ENCODE measurements at regions of chr14 and their contacts with region 1.

Region 1: DNA sequence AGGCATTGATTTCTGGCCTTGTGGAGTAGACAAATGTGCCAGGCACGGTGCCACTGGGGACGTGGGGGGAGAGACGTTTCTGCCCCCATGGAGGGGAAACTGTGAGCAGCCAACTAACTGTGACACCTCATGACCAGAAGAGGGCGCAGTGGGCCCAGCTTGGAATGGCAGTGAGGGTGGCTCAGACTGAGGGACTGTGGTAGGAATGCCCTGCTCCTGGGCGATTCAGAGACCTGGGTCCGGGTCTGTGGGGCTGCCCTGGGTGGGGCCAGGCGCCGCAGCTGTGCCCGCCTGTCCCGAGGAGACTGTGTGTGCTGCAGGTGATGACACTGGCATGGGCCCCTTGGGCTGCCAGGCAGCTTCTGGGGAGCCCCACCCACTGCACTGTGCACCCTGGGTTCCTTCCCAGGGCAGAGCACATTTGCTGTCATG is 60.6 kb downstream of the SLC25A47 start:
- DNase-seq: peak; percentile 87
- H3K4me3 ChIP-seq: peak overlapping the region in 1 of 2 experiments; percentile 15; a peak in 1 of 4 replicates
- H3K27ac ChIP-seq: peak overlapping the region in 1 of 2 experiments; percentile 90; a peak in 2 of 4 replicates
- H3K4me1 ChIP-seq: peaks cover 10 to 46% of the 10 kb centered on the region in 2 experiments
- H3K27me3 ChIP-seq: no peaks in the 10 kb centered on the region
- CTCF ChIP-seq: peak; percentile 83
- EP300 ChIP-seq: no peak
- RAD21 ChIP-seq: peak; percentile 88

Region 2: DNA sequence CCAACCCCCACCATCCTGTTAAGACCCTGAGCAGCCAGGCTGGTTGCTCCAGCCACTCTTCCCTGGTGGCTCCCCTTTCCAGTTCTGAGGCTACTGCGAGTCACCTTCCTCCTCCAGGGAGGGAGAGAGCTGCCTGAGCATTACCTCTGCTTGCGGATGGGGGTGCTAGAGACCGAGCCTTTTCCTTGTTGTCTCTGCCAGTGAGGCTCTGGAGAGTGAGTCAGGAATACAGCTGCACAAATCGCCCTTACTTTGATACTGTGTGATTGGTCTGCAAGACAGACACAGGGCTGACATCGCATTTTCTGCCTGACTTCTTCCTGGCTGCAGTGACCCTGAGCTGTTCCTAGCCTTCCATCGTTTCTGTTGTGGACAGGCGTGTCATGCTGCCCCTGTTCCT is 33.7 kb after region 1 on chr14:
- CTCF ChIA-PET with region 1: interaction called, 310 read pairs
- POLR2A ChIA-PET with region 1: interaction called, 7 read pairs
- DNase-seq: peak; percentile 85
- H3K4me3 ChIP-seq: no peak overlapping the region; a peak in 1 of 4 replicates
- H3K27ac ChIP-seq: peak overlapping the region; percentile 52 to 84
- H3K4me1 ChIP-seq: peaks cover 9 to 53% of the 10 kb centered on the region in 2 experiments
- H3K27me3 ChIP-seq: no peaks in the 10 kb centered on the region
- CTCF ChIP-seq: peak; percentile 88
- EP300 ChIP-seq: peak in 1 of 2 experiments; percentile 49; a peak in 1 of 4 replicates
- RAD21 ChIP-seq: peak; percentile 98

Region 3: GRCh38 chr14:100567009-100567876 is 183.5 kb after region 1 on chr14:
- CTCF ChIA-PET with region 1: interaction called, 13 read pairs
- POLR2A ChIA-PET with region 1: interaction called, 7 read pairs
- DNase-seq: peak; percentile 85
- H3K4me3 ChIP-seq: peak overlapping the region; percentile 58 to 59; a peak in 3 of 4 replicates
- H3K27ac ChIP-seq: peak overlapping the region in 1 of 2 experiments; percentile 94; a peak in 2 of 4 replicates
- H3K4me1 ChIP-seq: peaks cover 0 to 66% of the 10 kb centered on the region in 2 experiments; a peak in 1 of 4 replicates
- H3K27me3 ChIP-seq: peaks cover 18% of the 10 kb centered on the region
- CTCF ChIP-seq: no peak
- EP300 ChIP-seq: no peak
- RAD21 ChIP-seq: no peak

Region 4: DNA sequence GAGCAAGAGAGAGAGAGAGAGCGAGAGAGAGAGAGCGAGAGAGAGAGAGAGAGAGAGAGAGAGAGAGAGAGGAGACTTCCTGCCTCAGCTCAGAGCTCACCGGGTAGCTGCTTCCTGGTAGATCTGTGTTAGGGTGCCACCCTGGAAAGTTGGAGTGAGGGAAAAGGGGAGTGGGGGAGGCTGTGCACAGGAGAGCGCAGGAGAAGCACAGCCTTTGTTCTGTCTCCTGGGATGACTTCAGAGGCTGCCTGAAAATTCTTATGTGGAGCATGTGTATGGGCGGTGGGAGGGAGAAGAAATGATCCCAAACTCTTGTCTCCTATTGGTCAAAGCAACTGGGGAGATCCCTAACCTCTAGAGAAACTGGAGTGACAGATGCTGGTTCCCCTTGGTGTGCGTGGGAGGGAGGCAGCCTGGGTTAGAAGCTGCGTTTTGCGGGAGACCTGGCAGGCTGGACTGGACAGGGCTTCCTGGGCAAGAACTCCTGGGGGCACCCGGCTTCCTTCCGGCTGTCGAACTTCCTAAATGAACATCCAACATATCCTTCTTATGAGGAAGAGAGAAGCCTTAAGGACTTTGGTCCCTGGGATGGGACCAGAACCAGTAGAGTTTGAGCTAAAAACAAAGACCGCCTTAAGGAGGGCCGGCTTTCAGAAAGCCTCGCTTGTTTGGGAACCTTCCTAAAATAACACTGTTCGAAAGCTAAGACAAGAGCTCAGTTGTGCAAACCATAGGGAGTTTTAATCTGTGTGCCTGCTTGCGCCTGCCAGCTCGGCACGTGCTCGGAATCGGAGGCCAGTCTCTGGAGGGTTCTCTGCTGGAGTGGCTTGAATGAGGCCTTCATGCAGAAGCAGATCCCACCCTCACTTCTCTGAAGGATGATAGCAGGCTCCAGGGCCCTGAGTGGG is 233.9 kb after region 1 on chr14:
- CTCF ChIA-PET with region 1: no interaction called
- POLR2A ChIA-PET with region 1: no interaction called
- DNase-seq: peak; percentile 17
- H3K4me3 ChIP-seq: no peak overlapping the region
- H3K27ac ChIP-seq: no peak overlapping the region
- H3K4me1 ChIP-seq: peaks cover 0 to 44% of the 10 kb centered on the region in 2 experiments; a peak in 1 of 4 replicates
- H3K27me3 ChIP-seq: no peaks in the 10 kb centered on the region
- CTCF ChIP-seq: no peak
- EP300 ChIP-seq: no peak
- RAD21 ChIP-seq: no peak

Region 5: DNA sequence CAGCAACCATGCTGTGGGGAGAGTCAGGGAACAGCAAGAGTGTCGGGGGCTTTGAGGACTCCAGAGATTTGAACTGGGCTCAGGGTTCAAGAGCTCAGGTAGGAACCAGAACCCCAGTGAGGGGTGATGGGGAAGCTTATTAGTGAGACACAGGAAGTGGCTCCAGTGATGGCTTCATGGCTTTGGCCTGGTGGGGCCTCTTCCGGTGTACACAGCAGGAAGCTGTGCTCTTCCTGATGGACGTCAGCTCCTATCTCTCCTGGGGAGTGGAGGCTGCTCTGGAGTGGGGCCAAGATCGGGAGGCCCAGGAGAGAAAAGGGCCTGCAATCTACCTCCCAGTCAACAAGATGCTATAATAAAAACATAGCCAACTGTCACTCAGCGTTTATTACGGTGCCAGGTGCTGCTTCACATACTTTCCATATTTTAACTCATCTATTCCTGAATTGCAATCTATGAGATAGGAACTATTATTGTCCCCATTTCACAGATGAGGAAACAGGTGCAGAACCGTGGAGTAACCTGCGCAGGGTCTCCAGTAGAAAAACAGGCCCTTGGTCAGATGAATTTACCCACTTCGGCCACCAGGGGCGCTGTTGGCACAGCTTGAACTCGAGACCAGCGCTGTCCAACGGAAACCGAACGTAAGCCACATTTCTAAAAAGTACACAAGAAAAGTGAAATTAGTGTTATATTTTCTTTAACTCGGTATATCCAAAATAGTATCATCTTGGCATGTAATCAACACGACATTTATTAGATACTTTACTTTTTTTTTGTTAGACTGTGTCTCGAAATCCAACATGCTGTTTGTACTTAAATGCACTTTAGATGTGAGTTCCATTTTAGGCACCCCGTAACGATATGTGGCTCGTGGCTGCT is 279.4 kb after region 1 on chr14:
- CTCF ChIA-PET with region 1: interaction called, 33 read pairs
- POLR2A ChIA-PET with region 1: no interaction called
- DNase-seq: peak; percentile 85
- H3K4me3 ChIP-seq: no peak overlapping the region; a peak in 1 of 4 replicates
- H3K27ac ChIP-seq: peak overlapping the region in 1 of 2 experiments; percentile 77; a peak in 2 of 4 replicates
- H3K4me1 ChIP-seq: peaks cover 0 to 48% of the 10 kb centered on the region in 2 experiments; a peak in 1 of 4 replicates
- H3K27me3 ChIP-seq: no peaks in the 10 kb centered on the region
- CTCF ChIP-seq: peak; percentile 96
- EP300 ChIP-seq: no peak
- RAD21 ChIP-seq: peak; percentile 89

Region 6: GRCh38 chr14:100775831-100776591 is 392.3 kb after region 1 on chr14:
- CTCF ChIA-PET with region 1: interaction called, 15 read pairs
- POLR2A ChIA-PET with region 1: no interaction called
- DNase-seq: no peak
- H3K4me3 ChIP-seq: no peak overlapping the region
- H3K27ac ChIP-seq: peak overlapping the region in 1 of 2 experiments; percentile 100; a peak in 2 of 4 replicates
- H3K4me1 ChIP-seq: peaks cover 0 to 91% of the 10 kb centered on the region in 2 experiments; a peak in 2 of 4 replicates
- H3K27me3 ChIP-seq: no peaks in the 10 kb centered on the region
- CTCF ChIP-seq: no peak
- EP300 ChIP-seq: no peak
- RAD21 ChIP-seq: no peak

Region 7: GRCh38 chr14:101628471-101628966 is 1244.8 kb after region 1 on chr14:
- CTCF ChIA-PET with region 1: interaction called, 31 read pairs
- POLR2A ChIA-PET with region 1: no interaction called
- DNase-seq: peak; percentile 93
- H3K4me3 ChIP-seq: peak overlapping the region in 1 of 2 experiments; percentile 49; a peak in 1 of 4 replicates
- H3K27ac ChIP-seq: peak overlapping the region in 1 of 2 experiments; percentile 96; a peak in 2 of 4 replicates
- H3K4me1 ChIP-seq: peaks cover 0 to 36% of the 10 kb centered on the region in 2 experiments; a peak in 2 of 4 replicates
- H3K27me3 ChIP-seq: no peaks in the 10 kb centered on the region; the same call in 1 of the 2 replicates
- CTCF ChIP-seq: peak; percentile 88
- EP300 ChIP-seq: no peak; a peak in 1 of 4 replicates
- RAD21 ChIP-seq: peak; percentile 95